ENCODE measurements at regions of chr22 and their contacts with region 1.

Region 1: GRCh38 chr22:44383652-44384562 is 71.2 kb upstream of the SHISAL1 start:
- DNase-seq: no peak
- H3K4me3 ChIP-seq: no peak overlapping the region
- H3K27ac ChIP-seq: no peak overlapping the region
- H3K4me1 ChIP-seq: no peaks in the 10 kb centered on the region
- H3K27me3 ChIP-seq: no peaks in the 10 kb centered on the region
- CTCF ChIP-seq: no peak

Region 2: DNA sequence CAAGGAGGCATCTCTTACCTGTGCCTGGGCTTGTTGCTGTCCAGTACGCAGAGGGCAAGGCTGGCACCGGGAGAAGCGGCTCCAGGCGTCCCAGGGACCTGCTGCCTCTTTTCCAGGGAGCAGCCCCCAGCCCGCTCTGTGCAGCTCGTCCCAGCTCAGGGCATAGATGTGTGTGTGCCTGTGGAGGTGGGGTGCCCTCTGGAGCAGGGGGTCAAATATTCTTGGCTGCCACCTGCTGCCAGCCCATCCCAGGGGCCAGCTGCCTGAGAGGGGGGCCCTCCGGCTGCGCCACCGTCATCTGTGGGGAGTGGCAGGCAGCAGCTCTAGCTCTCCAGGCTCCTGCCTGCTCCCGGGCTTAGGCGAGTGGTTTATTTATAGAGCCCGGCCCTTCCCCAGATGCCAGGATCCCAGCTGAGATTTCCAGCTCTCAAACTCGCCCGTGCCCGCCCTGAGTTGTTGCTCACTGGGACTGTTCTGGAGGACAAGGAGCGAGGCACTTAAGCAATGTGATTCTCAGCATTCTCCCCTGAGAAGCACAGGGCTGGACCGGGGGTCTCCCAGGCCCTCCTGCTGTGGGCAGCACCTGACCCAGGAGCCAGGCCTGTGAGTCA is 26.6 kb after region 1 on chr22:
- intact Hi-C with region 1: no loop called
- DNase-seq: peak in 1 of 2 donors; percentile 48
- H3K4me3 ChIP-seq: no peak overlapping the region
- H3K27ac ChIP-seq: no peak overlapping the region
- H3K4me1 ChIP-seq: no peaks in the 10 kb centered on the region
- H3K27me3 ChIP-seq: no peaks in the 10 kb centered on the region
- CTCF ChIP-seq: no peak

Region 3: DNA sequence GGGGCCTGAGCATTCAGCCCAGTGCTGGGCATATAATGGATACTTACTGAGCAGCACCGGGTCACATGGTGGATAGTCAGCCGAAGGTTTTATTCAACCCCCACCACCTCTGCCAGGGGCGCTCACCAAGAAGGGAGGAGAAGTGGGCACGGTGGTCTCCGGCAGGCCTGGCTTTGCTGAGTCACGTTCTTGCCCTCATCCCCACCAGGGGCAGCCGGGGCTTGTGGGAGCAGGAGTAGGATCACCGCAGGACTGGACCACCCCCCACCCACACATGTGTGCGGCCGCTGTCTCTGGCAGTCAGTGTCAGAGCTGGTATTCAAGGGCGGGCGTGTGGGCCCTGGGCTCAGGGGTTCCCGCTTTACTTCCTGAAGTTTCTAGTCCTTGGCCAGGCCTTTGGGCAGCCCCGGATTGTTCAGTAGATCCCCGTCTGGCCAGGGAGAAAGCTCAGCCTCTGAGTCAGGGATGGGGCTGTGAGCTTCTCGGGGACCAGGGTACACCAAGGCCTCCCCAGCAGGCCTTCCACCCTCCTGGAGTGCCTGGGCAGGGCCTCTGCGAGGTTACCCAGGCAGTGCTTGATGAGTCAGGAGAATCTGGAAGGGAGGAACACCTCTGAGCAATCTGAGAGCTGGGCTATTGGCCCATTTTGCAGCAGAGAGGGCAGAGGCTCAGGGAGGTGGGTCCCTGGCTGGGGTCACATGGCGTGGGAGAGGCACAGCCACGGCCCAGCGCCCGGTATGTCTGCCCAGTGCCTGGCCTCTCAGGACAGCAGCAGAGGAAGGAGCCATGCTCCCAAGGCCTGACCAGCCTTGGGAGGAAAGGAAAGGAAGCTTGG is 53.5 kb after region 1 on chr22:
- intact Hi-C with region 1: loop called (anchors 2 kb)
- DNase-seq: peak in 1 of 2 donors; percentile 54
- H3K4me3 ChIP-seq: no peak overlapping the region
- H3K27ac ChIP-seq: no peak overlapping the region
- H3K4me1 ChIP-seq: no peaks in the 10 kb centered on the region
- H3K27me3 ChIP-seq: no peaks in the 10 kb centered on the region
- CTCF ChIP-seq: no peak

Region 4: GRCh38 chr22:44664149-44664548 is 280.2 kb after region 1 on chr22:
- intact Hi-C with region 1: no loop called
- DNase-seq: peak; percentile 44 to 74
- H3K4me3 ChIP-seq: no peak overlapping the region
- H3K27ac ChIP-seq: no peak overlapping the region
- H3K4me1 ChIP-seq: no peaks in the 10 kb centered on the region
- H3K27me3 ChIP-seq: peaks cover 1% of the 10 kb centered on the region
- CTCF ChIP-seq: no peak